Tibial artery (tissue), 4 donors: ENCODE measurements at regions of chr3 and their contacts with region 1.

Region 1: GRCh38 chr3:17258823-17259436 is 374.2 kb downstream of the PLCL2 start:
- DNase-seq: no peak
- H3K4me3 ChIP-seq: no peak overlapping the region
- H3K27ac ChIP-seq: no peak overlapping the region
- H3K4me1 ChIP-seq: no peaks in the 10 kb centered on the region
- H3K27me3 ChIP-seq: no peaks in the 10 kb centered on the region
- CTCF ChIP-seq: peak; percentile 69 to 73

Region 2: GRCh38 chr3:17412950-17413530 is 154.1 kb after region 1 on chr3:
- intact Hi-C with region 1: loop called (anchors 10 kb)
- DNase-seq: no peak
- H3K4me3 ChIP-seq: no peak overlapping the region
- H3K27ac ChIP-seq: no peak overlapping the region
- H3K4me1 ChIP-seq: no peaks in the 10 kb centered on the region
- H3K27me3 ChIP-seq: no peaks in the 10 kb centered on the region
- CTCF ChIP-seq: peak; percentile 66 to 68